ENCODE measurements at regions of chr15 and their contacts with region 1.

Region 1: GRCh38 chr15:60179786-60180391 is 175.8 kb downstream of the FOXB1 start:
- DNase-seq: peak; percentile 49
- H3K4me3 Mint-ChIP-seq: no peak overlapping the region
- H3K27ac Mint-ChIP-seq: no peak overlapping the region
- H3K4me1 Mint-ChIP-seq: no peaks in the 10 kb centered on the region
- H3K27me3 Mint-ChIP-seq: peaks cover under 1% of the 10 kb centered on the region

Region 2: GRCh38 chr15:59751552-59752413 is 428.1 kb before region 1 on chr15:
- CTCF ChIA-PET with region 1: interaction called, 4 read pairs
- intact Hi-C with region 1: loop called (anchors 1 kb)
- DNase-seq: no peak
- H3K4me3 Mint-ChIP-seq: no peak overlapping the region
- H3K27ac Mint-ChIP-seq: no peak overlapping the region
- H3K4me1 Mint-ChIP-seq: peaks cover 12% of the 10 kb centered on the region
- H3K27me3 Mint-ChIP-seq: no peaks in the 10 kb centered on the region

Region 3: DNA sequence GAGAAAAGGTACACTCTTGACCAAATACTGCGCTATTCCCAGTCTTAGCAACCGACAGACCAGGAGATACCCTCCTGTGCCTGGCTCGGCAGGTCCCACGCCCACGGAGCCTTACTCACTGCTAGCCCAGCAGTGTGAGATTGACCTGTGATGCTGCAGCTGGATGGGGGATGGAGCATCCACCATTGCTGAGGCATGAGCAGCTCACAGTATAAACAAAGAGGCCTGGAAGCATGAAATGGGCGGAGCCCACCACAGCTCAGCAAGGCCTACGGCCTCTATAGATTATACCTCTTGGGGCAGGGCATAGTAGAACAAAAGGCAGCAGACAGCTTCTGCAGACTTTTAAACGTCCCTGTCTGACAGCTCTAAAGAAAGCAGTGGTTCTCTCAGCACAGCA is 57.5 kb after region 1 on chr15:
- CTCF ChIA-PET with region 1: no interaction called
- intact Hi-C with region 1: no loop called
- DNase-seq: no peak
- H3K4me3 Mint-ChIP-seq: no peak overlapping the region
- H3K27ac Mint-ChIP-seq: no peak overlapping the region
- H3K4me1 Mint-ChIP-seq: peaks cover 5% of the 10 kb centered on the region
- H3K27me3 Mint-ChIP-seq: peaks cover 21% of the 10 kb centered on the region

Region 4: DNA sequence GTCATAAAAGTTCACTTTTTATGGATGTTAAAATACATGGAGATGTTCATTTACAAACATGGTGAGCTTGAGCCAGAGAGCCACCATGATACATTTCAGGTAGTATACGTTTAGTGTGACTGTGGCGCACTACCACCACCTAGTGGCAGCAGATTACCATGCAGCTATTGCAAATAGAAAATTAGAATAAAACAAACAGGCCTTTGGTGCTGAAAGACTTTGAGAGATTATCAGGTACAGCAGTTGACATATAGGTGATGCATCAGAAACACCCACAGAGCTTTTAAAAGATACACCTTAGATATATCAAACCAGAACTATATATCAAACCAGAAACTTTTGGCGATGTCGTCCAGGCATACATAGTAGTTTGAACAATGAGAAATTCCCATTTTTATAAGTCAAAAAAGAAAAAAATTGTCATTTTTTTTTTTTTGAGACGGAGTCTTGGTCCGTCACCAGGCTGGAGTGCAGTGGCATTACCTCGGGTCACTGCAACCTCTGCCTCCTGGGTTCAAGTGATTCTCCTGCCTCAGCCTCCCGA is 341.0 kb after region 1 on chr15:
- CTCF ChIA-PET with region 1: no interaction called
- intact Hi-C with region 1: no loop called
- DNase-seq: peak; percentile 91
- H3K4me3 Mint-ChIP-seq: no peak overlapping the region
- H3K27ac Mint-ChIP-seq: peak overlapping the region; percentile 42
- H3K4me1 Mint-ChIP-seq: peaks cover 42% of the 10 kb centered on the region
- H3K27me3 Mint-ChIP-seq: no peaks in the 10 kb centered on the region

Measured in activated naive CD4-positive, alpha-beta T cell treated with anti-CD3 and anti-CD28 coated beads for 36 hours (primary cell).